ENCODE measurements at regions of chr7 and their contacts with region 1.

Region 1: DNA sequence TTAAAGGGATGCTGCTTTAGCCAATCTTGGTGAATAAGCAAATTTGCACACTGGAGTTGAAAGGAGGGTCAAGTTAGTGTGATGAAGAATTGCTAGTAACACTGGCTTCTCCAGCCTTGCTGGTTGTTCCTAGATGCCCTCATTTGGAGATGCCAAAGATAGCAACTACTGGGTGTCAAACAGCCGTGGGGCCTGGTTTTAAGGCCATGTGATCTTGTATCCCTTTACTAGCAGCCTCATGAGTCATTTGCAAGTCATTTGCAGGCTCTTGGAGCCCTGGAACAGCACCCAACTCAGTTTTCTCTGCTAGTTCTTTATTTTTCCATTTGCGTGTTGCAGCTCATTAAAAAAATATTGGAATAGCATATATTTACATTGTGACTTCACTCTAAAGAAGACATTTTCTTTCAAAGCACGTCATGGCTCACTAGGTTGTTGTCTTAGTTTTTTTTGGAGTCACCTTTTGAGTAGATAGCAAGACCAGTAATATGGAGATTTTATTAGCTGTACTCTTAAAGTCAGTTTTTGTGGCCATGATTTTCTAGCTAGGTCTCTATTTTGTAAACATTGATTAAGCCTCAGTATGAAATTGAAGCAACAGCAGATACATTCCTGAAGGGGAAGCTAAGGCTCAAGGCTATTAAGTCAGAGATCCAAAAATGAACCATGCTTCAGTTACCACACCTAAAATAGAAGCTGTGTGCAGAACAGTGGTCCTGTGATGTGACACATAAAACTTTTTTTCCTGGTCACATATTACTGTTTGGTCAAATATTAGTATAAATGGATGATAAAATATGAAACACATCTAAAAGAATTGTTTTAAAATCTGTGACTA is 1.3 kb downstream of the LSMEM1 start:
- DNase-seq: peak; percentile 41
- H3K4me3 Mint-ChIP-seq: no peak overlapping the region
- H3K27ac Mint-ChIP-seq: no peak overlapping the region
- H3K4me1 Mint-ChIP-seq: peaks cover 7% of the 10 kb centered on the region
- H3K27me3 Mint-ChIP-seq: no peaks in the 10 kb centered on the region
- CTCF ChIP-seq: no peak

Region 2: DNA sequence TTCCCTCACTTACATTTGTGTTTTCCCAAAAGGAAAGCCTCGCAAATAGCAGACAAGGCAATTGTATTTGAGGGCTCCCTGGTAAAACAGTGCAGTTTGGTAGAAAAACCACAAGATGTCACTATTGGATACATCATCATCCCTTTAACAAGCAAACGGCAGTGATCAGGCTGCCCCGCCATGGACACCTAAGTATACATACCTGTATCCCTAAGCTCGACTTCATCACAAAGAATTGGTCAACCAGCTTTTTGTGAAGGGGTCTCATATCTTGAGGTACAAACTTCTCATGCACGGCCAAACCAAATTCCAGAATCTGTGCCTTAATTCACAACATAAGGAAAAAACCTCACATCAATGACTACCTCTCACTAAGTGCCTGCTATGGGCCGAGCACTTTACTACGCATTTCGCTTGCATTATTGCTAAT is 740.2 kb before region 1 on chr7:
- CTCF ChIA-PET with region 1: no interaction called
- intact Hi-C with region 1: loop called (anchors 5 kb)
- DNase-seq: peak; percentile 51
- H3K4me3 Mint-ChIP-seq: no peak overlapping the region
- H3K27ac Mint-ChIP-seq: no peak overlapping the region
- H3K4me1 Mint-ChIP-seq: peaks cover under 1% of the 10 kb centered on the region
- H3K27me3 Mint-ChIP-seq: no peaks in the 10 kb centered on the region
- CTCF ChIP-seq: peak; percentile 45

Region 3: GRCh38 chr7:112290065-112290464 is 192.0 kb before region 1 on chr7:
- CTCF ChIA-PET with region 1: no interaction called
- intact Hi-C with region 1: no loop called
- DNase-seq: no peak
- H3K4me3 Mint-ChIP-seq: no peak overlapping the region
- H3K27ac Mint-ChIP-seq: no peak overlapping the region
- H3K4me1 Mint-ChIP-seq: no peaks in the 10 kb centered on the region
- H3K27me3 Mint-ChIP-seq: no peaks in the 10 kb centered on the region
- CTCF ChIP-seq: no peak

Region 4: GRCh38 chr7:112692333-112692732 is 210.3 kb after region 1 on chr7:
- CTCF ChIA-PET with region 1: no interaction called
- intact Hi-C with region 1: no loop called
- DNase-seq: no peak
- H3K4me3 Mint-ChIP-seq: no peak overlapping the region
- H3K27ac Mint-ChIP-seq: no peak overlapping the region
- H3K4me1 Mint-ChIP-seq: no peaks in the 10 kb centered on the region
- H3K27me3 Mint-ChIP-seq: no peaks in the 10 kb centered on the region
- CTCF ChIP-seq: no peak

Region 5: DNA sequence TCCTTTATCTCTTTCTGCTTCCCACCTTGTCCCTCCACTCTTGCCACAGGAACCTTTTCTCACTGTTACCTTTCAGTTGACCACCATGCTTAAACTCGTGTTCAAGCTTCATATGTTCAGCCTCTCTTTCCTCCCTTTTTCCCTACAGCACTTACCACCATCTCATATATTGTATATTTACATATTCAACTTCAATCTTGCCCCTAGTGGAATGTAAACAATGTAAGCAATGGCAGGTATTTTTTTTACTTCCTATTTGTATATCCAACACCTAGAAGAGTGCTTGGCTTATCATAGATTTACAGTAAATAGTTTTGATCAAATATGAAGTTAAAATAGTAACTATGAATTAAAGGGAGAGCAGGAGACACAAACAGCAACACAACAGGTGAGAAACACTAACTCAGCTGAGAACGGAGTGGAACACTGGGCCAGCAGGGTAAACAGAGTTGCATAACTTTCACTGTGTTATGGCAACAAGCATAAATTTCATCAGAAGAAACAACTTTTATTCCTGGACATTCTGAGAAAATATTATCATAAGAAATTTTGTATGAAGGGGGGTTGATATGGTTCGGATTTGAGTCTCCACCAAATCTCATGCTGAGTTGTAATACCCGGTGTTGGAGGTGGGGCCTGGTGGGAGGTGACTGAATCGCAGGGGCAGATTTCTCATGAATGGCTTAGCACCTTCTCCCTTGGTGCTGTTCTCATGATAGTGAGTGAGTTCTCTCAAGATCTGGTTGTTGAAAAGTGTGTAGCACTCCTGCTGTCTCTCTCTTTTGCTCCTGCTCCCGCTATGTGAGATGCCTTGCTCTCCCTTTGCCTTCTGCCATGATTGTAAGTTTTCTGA is 688.5 kb after region 1 on chr7:
- CTCF ChIA-PET with region 1: no interaction called
- intact Hi-C with region 1: no loop called
- DNase-seq: no peak
- H3K4me3 Mint-ChIP-seq: no peak overlapping the region
- H3K27ac Mint-ChIP-seq: no peak overlapping the region
- H3K4me1 Mint-ChIP-seq: no peaks in the 10 kb centered on the region
- H3K27me3 Mint-ChIP-seq: no peaks in the 10 kb centered on the region
- CTCF ChIP-seq: no peak